ENCODE measurements at regions of chr21 and their contacts with region 1.

Region 1: GRCh38 chr21:33915368-33916199 is at the start of gene ATP5PO:
- DNase-seq: peak; percentile 100
- total RNA-seq, gene ATP5PO: 138 to 167 TPM

Region 2: GRCh38 chr21:32638785-32639184 is 1276.8 kb before region 1 on chr21:
- intact Hi-C with region 1: loop called in 1 of 2 experiments (anchors 5 kb)
- DNase-seq: no peak

Region 3: GRCh38 chr21:33968080-33968994 is 52.8 kb after region 1 on chr21:
- intact Hi-C with region 1: no loop called
- DNase-seq: no peak

Region 4: GRCh38 chr21:34345091-34345871 is 429.7 kb after region 1 on chr21:
- intact Hi-C with region 1: loop called (anchors 5 kb)
- DNase-seq: no peak

Region 5: DNA sequence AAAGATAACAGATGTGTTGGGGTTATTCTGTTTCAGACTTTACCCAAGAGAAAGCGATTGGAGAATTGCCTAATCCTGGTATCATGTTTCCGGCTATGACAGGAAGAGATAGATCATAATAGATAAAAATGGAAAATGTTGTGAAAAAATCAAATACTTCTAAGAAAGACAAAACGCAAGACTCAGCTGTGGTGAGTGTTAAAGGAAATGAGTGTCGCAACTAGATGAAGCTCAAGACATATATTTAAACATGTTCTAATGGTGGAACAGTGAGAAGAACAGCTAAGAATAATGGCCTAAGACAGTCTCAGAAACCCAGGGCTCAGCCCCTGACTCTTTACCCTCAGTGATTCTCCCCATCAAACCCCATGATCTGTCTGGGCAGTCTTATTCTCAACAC is 1560.2 kb after region 1 on chr21:
- intact Hi-C with region 1: loop called in 1 of 2 experiments (anchors 5 kb)
- DNase-seq: no peak

Measured in posterior vena cava (tissue), 2 donors.